Gastrocnemius medialis (tissue), 4 donors: ENCODE measurements at regions of chr7 and their contacts with region 1.

Region 1: DNA sequence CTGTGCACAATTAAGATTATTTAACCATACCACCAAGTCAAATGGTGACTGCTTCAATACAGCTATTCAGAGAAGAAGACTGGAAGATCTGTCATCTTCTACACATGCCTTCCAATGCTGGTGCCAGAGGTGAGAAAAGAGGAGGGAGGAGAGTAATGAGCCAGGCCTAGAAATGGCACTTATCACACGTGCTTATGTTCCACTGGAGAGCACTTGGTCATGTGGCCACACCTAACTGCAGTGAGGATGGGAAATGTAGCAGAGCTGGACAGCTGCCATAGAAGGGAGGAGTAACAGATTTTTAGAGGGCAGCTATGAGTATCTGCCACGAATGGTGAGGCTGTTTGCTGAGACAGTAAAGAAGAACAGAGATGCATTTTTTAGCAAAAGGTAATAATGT is 77.1 kb downstream of the MPLKIP start:
- DNase-seq: no peak
- ATAC-seq: peak in 1 of 2 donors; percentile 47
- H3K4me3 ChIP-seq: no peak overlapping the region
- H3K27ac ChIP-seq: no peak overlapping the region
- H3K4me1 ChIP-seq: peaks cover 10 to 12% of the 10 kb centered on the region in 2 donors
- H3K27me3 ChIP-seq: no peaks in the 10 kb centered on the region
- CTCF ChIP-seq: no peak
- POLR2A ChIP-seq: no peak

Region 2: DNA sequence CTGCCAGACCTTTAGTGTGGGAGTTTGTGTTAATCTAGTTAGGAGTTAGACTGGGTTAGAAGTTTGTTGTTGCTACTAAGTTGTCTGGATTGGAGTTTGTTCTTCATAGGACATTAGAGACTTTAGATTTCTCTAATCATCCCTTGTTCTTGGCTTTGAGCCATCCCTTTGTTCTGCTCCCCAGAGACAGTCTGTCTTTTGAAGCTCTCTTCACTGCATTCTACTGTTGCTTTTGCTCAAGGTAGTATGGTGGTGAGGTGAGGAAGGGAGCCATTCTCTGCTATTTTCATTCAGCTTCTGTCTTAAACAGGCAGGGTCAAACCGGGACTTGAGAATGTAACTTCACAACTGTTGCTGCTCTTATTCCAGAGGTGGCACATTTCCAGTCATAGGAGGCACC is 1773.5 kb before region 1 on chr7:
- in situ Hi-C with region 1: no loop called
- intact Hi-C with region 1: no loop called
- DNase-seq: no peak
- ATAC-seq: no peak
- H3K4me3 ChIP-seq: no peak overlapping the region
- H3K27ac ChIP-seq: no peak overlapping the region
- H3K4me1 ChIP-seq: no peaks in the 10 kb centered on the region
- H3K27me3 ChIP-seq: no peaks in the 10 kb centered on the region
- CTCF ChIP-seq: no peak
- POLR2A ChIP-seq: no peak

Region 3: GRCh38 chr7:39488467-39489393 is 568.6 kb before region 1 on chr7:
- in situ Hi-C with region 1: no loop called
- intact Hi-C with region 1: no loop called
- DNase-seq: no peak
- ATAC-seq: no peak
- H3K4me3 ChIP-seq: no peak overlapping the region
- H3K27ac ChIP-seq: no peak overlapping the region
- H3K4me1 ChIP-seq: no peaks in the 10 kb centered on the region
- H3K27me3 ChIP-seq: no peaks in the 10 kb centered on the region
- CTCF ChIP-seq: no peak
- POLR2A ChIP-seq: no peak

Region 4: GRCh38 chr7:39894904-39895303 is 162.4 kb before region 1 on chr7:
- in situ Hi-C with region 1: loop called (anchors 5 kb)
- intact Hi-C with region 1: loop called (anchors 1 kb)
- DNase-seq: no peak
- ATAC-seq: no peak
- H3K4me3 ChIP-seq: no peak overlapping the region
- H3K27ac ChIP-seq: no peak overlapping the region
- H3K4me1 ChIP-seq: peaks cover 0 to 3% of the 10 kb centered on the region in 2 donors
- H3K27me3 ChIP-seq: no peaks in the 10 kb centered on the region
- CTCF ChIP-seq: no peak
- POLR2A ChIP-seq: no peak

Region 5: GRCh38 chr7:40077849-40078248 is 20.6 kb after region 1 on chr7:
- in situ Hi-C with region 1: no loop called
- intact Hi-C with region 1: loop called (anchors 1 kb)
- DNase-seq: no peak
- ATAC-seq: no peak
- H3K4me3 ChIP-seq: no peak overlapping the region
- H3K27ac ChIP-seq: no peak overlapping the region
- H3K4me1 ChIP-seq: no peaks in the 10 kb centered on the region
- H3K27me3 ChIP-seq: no peaks in the 10 kb centered on the region
- CTCF ChIP-seq: no peak
- POLR2A ChIP-seq: no peak

Region 6: DNA sequence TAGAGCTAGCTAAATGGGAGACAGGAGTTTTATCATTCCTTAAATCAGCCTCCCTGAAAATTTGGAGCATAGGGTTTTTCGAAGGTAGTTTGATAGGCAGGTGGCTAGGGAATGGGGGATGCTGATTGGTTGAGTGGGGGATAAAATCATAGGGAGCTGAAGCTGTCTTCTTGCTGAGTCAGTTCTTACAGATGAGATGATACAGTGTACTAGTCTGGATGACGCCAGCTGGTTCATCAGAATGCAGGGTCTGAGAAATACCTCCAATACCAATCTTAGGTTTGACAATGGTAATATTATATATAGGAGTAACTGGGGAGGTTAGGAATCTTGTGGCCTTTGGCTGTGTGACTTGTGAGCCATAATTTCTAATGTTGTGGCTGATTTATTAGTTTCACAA is 348.7 kb after region 1 on chr7:
- in situ Hi-C with region 1: no loop called
- intact Hi-C with region 1: no loop called
- DNase-seq: no peak
- ATAC-seq: no peak
- H3K4me3 ChIP-seq: no peak overlapping the region
- H3K27ac ChIP-seq: no peak overlapping the region
- H3K4me1 ChIP-seq: no peaks in the 10 kb centered on the region
- H3K27me3 ChIP-seq: no peaks in the 10 kb centered on the region
- CTCF ChIP-seq: no peak
- POLR2A ChIP-seq: no peak